Caco-2 (cell line): ENCODE measurements at regions of chr2 and their contacts with region 1.

Region 1: DNA sequence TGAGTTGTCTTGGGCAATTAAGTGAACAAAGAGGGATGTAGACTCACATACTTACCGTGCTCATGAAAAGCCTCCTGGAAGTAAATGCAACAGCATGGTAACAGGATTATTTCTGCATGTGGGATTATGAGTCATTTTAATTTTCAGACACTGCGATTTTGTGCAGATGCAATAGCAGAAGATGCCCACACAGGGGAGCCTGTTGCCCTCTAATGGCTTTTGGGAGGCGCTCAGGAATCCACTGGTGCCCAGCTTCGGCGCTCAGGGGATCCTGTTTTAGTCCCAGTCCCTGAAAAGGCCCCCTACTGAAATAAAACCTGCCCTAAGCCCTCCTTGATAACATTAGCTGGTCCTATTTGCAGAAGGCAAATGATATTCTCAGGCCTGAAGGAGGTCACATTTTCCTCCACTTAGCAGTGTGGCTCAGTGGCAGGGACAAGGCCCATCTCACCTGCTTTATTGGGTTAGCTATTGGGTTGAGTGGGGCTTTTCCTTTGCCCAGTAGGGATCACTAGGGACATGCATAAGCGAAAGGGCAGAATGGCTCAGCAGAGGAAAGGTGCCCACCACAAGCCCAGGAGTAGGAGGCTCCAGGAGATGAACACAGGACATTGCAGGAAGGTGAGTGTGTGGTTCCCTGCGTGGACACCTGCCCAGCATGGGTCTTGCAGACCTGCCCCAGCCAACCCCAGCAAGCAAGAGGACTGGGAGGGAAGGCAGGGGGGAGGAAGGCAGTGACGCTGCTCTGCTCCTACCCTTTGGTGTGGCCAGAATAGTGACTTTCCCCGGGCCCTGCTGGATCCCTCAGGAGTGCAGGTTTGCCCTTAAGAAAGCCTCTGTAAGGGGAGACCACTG is 26.5 kb upstream of the KCNS3 start:
- DNase-seq: peak; percentile 56 to 58
- H3K4me3 ChIP-seq: no peak overlapping the region
- H3K4me3 Mint-ChIP-seq: no peak overlapping the region
- H3K27ac Mint-ChIP-seq: no peak overlapping the region
- H3K4me1 ChIP-seq: no peaks in the 10 kb centered on the region
- H3K4me1 Mint-ChIP-seq: no peaks in the 10 kb centered on the region
- H3K27me3 ChIP-seq: no peaks in the 10 kb centered on the region
- H3K27me3 Mint-ChIP-seq: peaks cover 5% of the 10 kb centered on the region
- CTCF ChIP-seq: peak; percentile 87 to 90

Region 2: DNA sequence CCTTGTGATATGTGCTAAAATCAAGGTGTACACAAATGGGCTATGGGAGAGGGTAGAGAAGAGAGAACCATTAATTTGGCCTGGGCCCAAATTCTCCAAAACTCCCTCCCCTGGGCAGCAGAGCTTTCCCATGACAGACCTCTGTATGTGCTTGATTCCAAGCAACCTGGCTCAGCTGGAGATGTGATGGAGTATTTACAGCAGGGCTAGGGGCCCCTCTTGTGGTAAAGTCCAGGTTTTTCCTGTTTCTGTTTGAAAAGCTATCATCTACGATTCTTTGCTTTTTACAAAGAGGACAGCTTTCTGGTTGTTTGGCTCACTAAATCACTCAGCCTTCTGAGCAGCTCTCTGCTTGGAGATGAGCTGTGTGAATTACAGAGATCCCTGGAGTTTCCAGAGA is 66.8 kb after region 1 on chr2:
- CTCF ChIA-PET with region 1: interaction called, 10 read pairs
- POLR2A ChIA-PET with region 1: no interaction called
- intact Hi-C with region 1: loop called (anchors 1 kb)
- DNase-seq: peak in 1 of 2 experiments; percentile 16
- H3K4me3 ChIP-seq: no peak overlapping the region
- H3K4me3 Mint-ChIP-seq: no peak overlapping the region
- H3K27ac Mint-ChIP-seq: no peak overlapping the region
- H3K4me1 ChIP-seq: no peaks in the 10 kb centered on the region
- H3K4me1 Mint-ChIP-seq: no peaks in the 10 kb centered on the region
- H3K27me3 ChIP-seq: no peaks in the 10 kb centered on the region
- H3K27me3 Mint-ChIP-seq: no peaks in the 10 kb centered on the region
- CTCF ChIP-seq: peak; percentile 29 to 64

Region 3: DNA sequence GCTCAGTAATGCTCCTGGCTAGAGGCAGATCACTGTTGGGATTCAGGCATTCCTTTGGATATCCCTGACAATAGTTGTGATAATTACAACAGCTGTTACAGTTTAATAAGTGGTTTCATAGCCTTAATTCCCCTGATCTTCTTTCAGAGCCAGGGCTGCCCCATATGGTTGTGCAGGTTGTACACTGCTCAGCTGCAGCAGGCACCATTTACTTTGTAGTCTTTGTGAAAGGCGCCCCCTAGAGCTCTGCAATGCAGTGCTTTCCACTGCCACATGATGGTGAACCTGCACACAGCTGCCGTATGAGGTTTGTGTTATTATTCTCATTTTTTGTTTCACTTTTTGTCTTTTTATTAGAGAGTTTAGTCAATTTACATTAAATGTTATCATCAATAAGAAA is 265.6 kb after region 1 on chr2:
- CTCF ChIA-PET with region 1: no interaction called
- POLR2A ChIA-PET with region 1: no interaction called
- intact Hi-C with region 1: loop called (anchors 2 kb)
- DNase-seq: peak; percentile 14 to 38
- H3K4me3 ChIP-seq: no peak overlapping the region
- H3K4me3 Mint-ChIP-seq: no peak overlapping the region
- H3K27ac Mint-ChIP-seq: no peak overlapping the region
- H3K4me1 ChIP-seq: no peaks in the 10 kb centered on the region
- H3K4me1 Mint-ChIP-seq: no peaks in the 10 kb centered on the region
- H3K27me3 ChIP-seq: no peaks in the 10 kb centered on the region; the same call in 1 of the 2 replicates
- H3K27me3 Mint-ChIP-seq: peaks cover 8% of the 10 kb centered on the region
- CTCF ChIP-seq: peak; percentile 8 to 17

Region 4: DNA sequence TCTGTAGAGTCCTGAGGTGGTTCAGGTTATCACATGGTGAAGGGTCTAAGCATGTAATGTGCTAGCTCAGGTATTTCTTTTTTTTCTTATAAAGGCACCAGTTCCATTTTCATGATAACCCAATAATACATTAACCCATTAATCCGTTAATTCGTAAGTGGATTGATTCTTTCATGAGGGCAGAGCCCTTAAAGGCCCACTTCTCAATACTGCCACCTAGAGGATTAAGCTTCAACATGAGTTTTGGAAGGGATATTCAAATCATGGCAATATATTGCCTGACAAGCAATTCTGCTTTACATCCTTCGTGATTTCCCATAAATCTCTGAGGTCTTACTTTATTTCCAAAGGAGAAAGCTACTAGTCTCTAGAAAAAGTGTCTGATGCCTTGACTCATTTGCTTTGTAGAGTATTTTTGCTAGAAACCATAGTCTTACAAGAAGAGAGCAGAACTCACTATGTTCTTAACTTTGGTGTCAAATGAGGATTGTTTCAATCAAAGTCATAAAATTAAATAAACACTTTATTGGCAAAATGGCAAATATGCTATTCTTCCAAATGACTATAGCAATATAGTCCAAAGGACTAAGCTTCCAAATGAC is 297.8 kb after region 1 on chr2:
- CTCF ChIA-PET with region 1: interaction called, 4 read pairs
- POLR2A ChIA-PET with region 1: no interaction called
- intact Hi-C with region 1: loop called (anchors 1 kb)
- DNase-seq: peak in 1 of 2 experiments; percentile 24
- H3K4me3 ChIP-seq: no peak overlapping the region
- H3K4me3 Mint-ChIP-seq: no peak overlapping the region
- H3K27ac Mint-ChIP-seq: no peak overlapping the region
- H3K4me1 ChIP-seq: no peaks in the 10 kb centered on the region
- H3K4me1 Mint-ChIP-seq: no peaks in the 10 kb centered on the region
- H3K27me3 ChIP-seq: no peaks in the 10 kb centered on the region
- H3K27me3 Mint-ChIP-seq: peaks cover 10% of the 10 kb centered on the region
- CTCF ChIP-seq: peak; percentile 67 to 69

Region 5: DNA sequence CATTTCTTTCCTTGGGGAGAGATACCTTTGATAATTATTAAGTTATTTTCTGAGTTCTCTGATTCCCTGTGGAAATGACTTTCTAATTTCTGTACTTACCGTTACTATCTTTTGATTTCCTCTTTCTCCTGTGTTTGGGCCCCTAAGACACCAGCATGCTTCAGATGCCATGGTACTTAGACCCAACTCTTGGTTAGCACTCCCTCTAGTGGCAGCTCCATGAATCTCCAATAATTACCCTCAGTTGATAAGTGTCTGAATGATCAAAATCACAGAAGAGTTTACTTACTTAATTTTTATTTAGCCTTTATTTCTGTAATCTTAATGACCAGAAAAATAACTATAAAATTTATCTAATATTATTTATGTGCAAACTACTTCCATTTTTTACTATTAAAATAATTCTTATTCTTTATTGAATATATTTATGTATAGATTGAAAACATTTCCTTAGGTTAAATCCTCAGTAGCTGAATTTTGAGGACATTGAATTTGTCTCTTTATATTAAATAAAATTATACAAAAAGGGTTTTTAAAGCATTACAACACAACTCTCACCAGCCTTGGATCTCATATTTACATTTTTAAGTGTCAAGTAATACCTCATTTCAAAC is 326.9 kb after region 1 on chr2:
- CTCF ChIA-PET with region 1: no interaction called
- POLR2A ChIA-PET with region 1: no interaction called
- intact Hi-C with region 1: loop called (anchors 1 kb)
- DNase-seq: peak in 1 of 2 experiments; percentile 59
- H3K4me3 ChIP-seq: no peak overlapping the region
- H3K4me3 Mint-ChIP-seq: no peak overlapping the region
- H3K27ac Mint-ChIP-seq: no peak overlapping the region
- H3K4me1 ChIP-seq: no peaks in the 10 kb centered on the region
- H3K4me1 Mint-ChIP-seq: peaks cover 14% of the 10 kb centered on the region
- H3K27me3 ChIP-seq: no peaks in the 10 kb centered on the region
- H3K27me3 Mint-ChIP-seq: peaks cover 2% of the 10 kb centered on the region
- CTCF ChIP-seq: peak; percentile 76 to 80